ENCODE measurements at regions of chr9 and their contacts with region 1.

Region 1: GRCh38 chr9:21616082-21616778 is 134.1 kb upstream of the IFNE start:
- DNase-seq: no peak
- H3K4me3 Mint-ChIP-seq: no peak overlapping the region
- H3K27ac Mint-ChIP-seq: no peak overlapping the region
- H3K4me1 Mint-ChIP-seq: peaks cover 26% of the 10 kb centered on the region
- H3K27me3 Mint-ChIP-seq: no peaks in the 10 kb centered on the region

Region 2: GRCh38 chr9:21591221-21592062 is 24.8 kb before region 1 on chr9:
- intact Hi-C with region 1: loop called (anchors 1 kb)
- DNase-seq: peak; percentile 79
- H3K4me3 Mint-ChIP-seq: peak overlapping the region; percentile 1
- H3K27ac Mint-ChIP-seq: peak overlapping the region; percentile 15
- H3K4me1 Mint-ChIP-seq: peaks cover 16% of the 10 kb centered on the region
- H3K27me3 Mint-ChIP-seq: peaks cover 10% of the 10 kb centered on the region

Region 3: GRCh38 chr9:21677834-21678233 is 61.6 kb after region 1 on chr9:
- intact Hi-C with region 1: loop called (anchors 5 kb)
- DNase-seq: no peak
- H3K4me3 Mint-ChIP-seq: no peak overlapping the region
- H3K27ac Mint-ChIP-seq: no peak overlapping the region
- H3K4me1 Mint-ChIP-seq: no peaks in the 10 kb centered on the region
- H3K27me3 Mint-ChIP-seq: peaks cover 6% of the 10 kb centered on the region